Adrenal gland (tissue), 19 donors: ENCODE measurements at regions of chr1 and their contacts with region 1.

Region 1: GRCh38 chr1:15028102-15028501 is 125.4 kb upstream of the TMEM51 start:
- DNase-seq: peak in 5 of 7 donors; percentile 51 to 73 (median 63)
- H3K4me3 ChIP-seq: no peak overlapping the region
- H3K27ac ChIP-seq: peak overlapping the region in 1 of 5 donors; percentile 21
- H3K4me1 ChIP-seq: no peaks in the 10 kb centered on the region
- H3K27me3 ChIP-seq: no peaks in the 10 kb centered on the region
- CTCF ChIP-seq: no peak
- POLR2A ChIP-seq: no peak

Region 2: GRCh38 chr1:14923727-14924452 is 104.2 kb before region 1 on chr1:
- intact Hi-C with region 1: loop called (anchors 5 kb)
- DNase-seq: peak; percentile 71 to 83 (median 79)
- H3K4me3 ChIP-seq: peak overlapping the region in 1 of 4 donors; percentile 63
- H3K27ac ChIP-seq: peak overlapping the region in 3 of 5 donors; percentile 5 to 88 (median 23)
- H3K4me1 ChIP-seq: peaks cover 0 to 27% of the 10 kb centered on the region in 2 donors
- H3K27me3 ChIP-seq: no peaks in the 10 kb centered on the region
- CTCF ChIP-seq: no peak
- POLR2A ChIP-seq: peak in 1 of 2 donors; percentile 40

Region 3: DNA sequence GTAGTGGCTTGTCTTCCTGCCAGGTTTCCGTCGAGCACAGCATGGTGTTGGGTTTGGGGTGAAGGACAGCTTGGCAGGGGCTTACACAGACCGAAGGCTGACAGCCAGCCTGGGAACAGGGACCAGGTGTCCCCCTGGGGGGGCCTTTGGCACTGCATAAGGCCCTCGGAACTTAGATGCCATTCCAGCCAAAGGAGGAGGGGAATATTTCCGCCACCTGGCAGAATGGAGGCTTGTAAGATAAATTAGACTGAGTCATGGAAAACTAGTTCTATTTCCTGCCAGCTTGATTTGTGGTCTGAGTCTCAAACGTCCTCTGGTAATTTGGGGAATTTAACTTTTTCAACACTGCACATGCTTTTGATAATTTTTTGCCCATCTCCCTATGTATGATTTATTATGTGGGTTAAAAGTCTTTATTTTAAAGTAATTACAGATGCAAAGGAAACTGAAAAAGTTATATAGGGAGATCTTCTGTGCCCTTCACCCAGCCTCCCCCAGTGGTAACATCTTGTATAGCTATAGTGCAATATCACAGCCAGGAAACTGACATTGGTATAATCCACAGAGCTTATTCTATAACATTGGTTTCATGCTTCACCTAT is 113.9 kb after region 1 on chr1:
- intact Hi-C with region 1: no loop called
- DNase-seq: peak; percentile 76 to 92 (median 87)
- H3K4me3 ChIP-seq: no peak overlapping the region
- H3K27ac ChIP-seq: peak overlapping the region in 4 of 5 donors; percentile 13 to 91 (median 71)
- H3K4me1 ChIP-seq: peaks cover 28 to 74% of the 10 kb centered on the region in 2 donors
- H3K27me3 ChIP-seq: no peaks in the 10 kb centered on the region
- CTCF ChIP-seq: peak in 5 of 6 experiments; percentile 25 to 56 (median 38)
- POLR2A ChIP-seq: no peak